ENCODE measurements at regions of chr2 and their contacts with region 1.

Region 1: GRCh38 chr2:113173542-113174395 is at the start of gene PSD4:
- DNase-seq: peak; percentile 95
- ATAC-seq: peak; percentile 81
- H3K4me3 Mint-ChIP-seq: peak within 1 kb of the TSS; percentile 91
- H3K27ac Mint-ChIP-seq: peak within 1 kb of the TSS; percentile 99
- H3K4me1 Mint-ChIP-seq: peaks cover 73% of the 10 kb centered on the region
- H3K27me3 Mint-ChIP-seq: no peaks in the 10 kb centered on the region
- total RNA-seq, gene PSD4: 232 to 274 TPM

Region 2: DNA sequence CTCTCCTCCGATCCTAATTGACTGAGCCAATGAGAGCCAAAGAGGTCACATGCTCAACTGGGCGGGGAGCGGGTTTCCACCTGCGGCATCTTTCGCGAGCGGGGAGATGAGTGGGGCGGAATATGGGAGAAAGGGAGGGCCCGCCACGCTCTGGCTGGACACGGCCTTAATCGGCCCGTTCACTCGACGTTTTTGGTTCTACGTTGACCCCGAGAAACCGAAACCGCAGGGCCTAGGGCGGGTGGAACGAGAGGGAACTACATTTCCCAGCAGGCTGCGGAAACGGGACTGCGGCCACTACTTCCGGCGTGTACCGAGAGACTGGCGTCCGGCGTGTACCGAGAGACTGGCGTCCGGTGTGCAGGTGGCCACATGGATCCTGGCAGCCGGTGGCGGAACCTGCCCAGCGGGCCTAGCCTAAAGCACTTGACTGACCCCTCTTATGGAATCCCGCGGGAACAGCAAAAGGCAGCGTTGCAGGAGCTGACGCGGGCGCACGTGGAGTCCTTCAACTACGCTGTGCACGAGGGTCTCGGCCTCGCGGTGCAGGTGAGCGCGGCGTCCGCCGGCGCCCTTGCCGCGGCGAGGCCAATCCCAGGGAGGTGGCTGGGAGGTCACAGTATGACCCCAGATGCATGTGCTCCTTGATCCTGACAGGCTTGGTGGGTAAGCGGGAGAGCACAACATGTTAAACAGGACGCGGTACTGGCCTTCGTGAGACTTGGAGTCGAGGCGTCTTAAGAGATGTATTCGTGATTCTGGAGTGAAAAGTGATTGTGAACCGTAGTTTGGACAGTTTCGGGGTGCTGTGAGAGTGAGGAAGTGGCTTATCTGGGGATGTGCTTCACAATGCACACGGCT is 631.4 kb before region 1 on chr2 and contains the start of gene POLR1B:
- CTCF ChIA-PET with region 1: no interaction called
- POLR2A ChIA-PET with region 1: no interaction called
- intact Hi-C with region 1: loop called in 1 of 2 experiments (anchors 10 kb)
- DNase-seq: peak; percentile 87
- ATAC-seq: peak; percentile 85
- H3K4me3 Mint-ChIP-seq: no peak within 1 kb of the TSS
- H3K27ac Mint-ChIP-seq: no peak within 1 kb of the TSS
- H3K4me1 Mint-ChIP-seq: peaks cover 18% of the 10 kb centered on the region
- H3K27me3 Mint-ChIP-seq: no peaks in the 10 kb centered on the region
- total RNA-seq, gene POLR1B: 47.0 to 63.3 TPM

Region 3: GRCh38 chr2:112784199-112785189 is 389.3 kb before region 1 on chr2 and contains the start of gene IL1A:
- CTCF ChIA-PET with region 1: no interaction called
- POLR2A ChIA-PET with region 1: no interaction called
- intact Hi-C with region 1: no loop called
- DNase-seq: peak; percentile 28
- ATAC-seq: peak; percentile 71
- H3K4me3 Mint-ChIP-seq: peak within 1 kb of the TSS; percentile 22
- H3K27ac Mint-ChIP-seq: no peak within 1 kb of the TSS
- H3K4me1 Mint-ChIP-seq: peaks cover 3% of the 10 kb centered on the region
- H3K27me3 Mint-ChIP-seq: peaks cover 8% of the 10 kb centered on the region
- total RNA-seq, gene IL1A: 6.6 to 6.9 TPM

Region 4: DNA sequence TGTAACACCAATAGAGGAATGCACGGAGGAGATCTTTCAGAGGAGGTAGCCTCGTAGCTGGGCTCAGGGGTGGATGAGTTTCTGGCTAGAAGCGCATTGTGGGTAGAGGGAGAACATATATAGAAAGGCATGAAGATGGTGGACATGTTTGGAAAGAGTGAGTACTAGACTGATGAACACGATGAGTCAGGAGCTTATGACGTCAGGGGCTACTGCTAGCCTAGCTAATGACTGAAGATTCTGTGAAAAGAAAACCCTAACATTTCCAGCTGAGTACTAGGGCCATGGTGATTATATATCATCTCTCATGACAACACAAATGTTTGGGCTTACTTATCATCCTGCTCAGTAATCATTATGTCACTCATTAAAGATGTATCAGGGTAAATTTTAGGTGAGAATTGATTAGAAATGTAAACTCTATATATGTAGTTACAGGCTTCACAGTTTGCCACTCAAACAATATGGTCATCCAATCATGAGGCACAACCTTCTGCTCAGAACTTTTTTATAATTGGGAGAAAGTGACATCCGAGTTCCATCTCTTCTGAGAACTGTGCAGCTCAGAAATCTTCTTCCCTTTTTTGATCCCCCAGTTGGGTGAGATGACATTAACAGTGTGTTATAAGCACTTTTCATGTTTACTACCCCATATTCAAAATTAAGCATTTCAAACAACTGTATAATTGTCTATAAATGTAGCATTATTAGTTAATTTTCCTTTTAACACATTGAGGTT is 68.6 kb before region 1 on chr2:
- CTCF ChIA-PET with region 1: interaction called, 13 read pairs
- POLR2A ChIA-PET with region 1: interaction called, 3 read pairs
- intact Hi-C with region 1: no loop called
- DNase-seq: peak; percentile 73
- ATAC-seq: peak; percentile 59
- H3K4me3 Mint-ChIP-seq: no peak overlapping the region
- H3K27ac Mint-ChIP-seq: peak overlapping the region; percentile 93
- H3K4me1 Mint-ChIP-seq: peaks cover 39% of the 10 kb centered on the region
- H3K27me3 Mint-ChIP-seq: peaks cover 4% of the 10 kb centered on the region

Region 5: GRCh38 chr2:113157118-113157896 is 16.5 kb before region 1 on chr2:
- CTCF ChIA-PET with region 1: interaction called, 54 read pairs
- POLR2A ChIA-PET with region 1: interaction called, 22 read pairs
- intact Hi-C with region 1: loop called (anchors 1 kb)
- DNase-seq: peak; percentile 74
- ATAC-seq: peak; percentile 61
- H3K4me3 Mint-ChIP-seq: peak overlapping the region; percentile 82
- H3K27ac Mint-ChIP-seq: peak overlapping the region; percentile 90
- H3K4me1 Mint-ChIP-seq: peaks cover 22% of the 10 kb centered on the region
- H3K27me3 Mint-ChIP-seq: no peaks in the 10 kb centered on the region

Region 6: GRCh38 chr2:113198790-113199612 is 25.2 kb after region 1 on chr2:
- CTCF ChIA-PET with region 1: interaction called, 24 read pairs
- POLR2A ChIA-PET with region 1: interaction called, 8 read pairs
- intact Hi-C with region 1: loop called in 1 of 2 experiments (anchors 1 kb)
- DNase-seq: peak; percentile 88
- ATAC-seq: peak; percentile 70
- H3K4me3 Mint-ChIP-seq: no peak overlapping the region
- H3K27ac Mint-ChIP-seq: no peak overlapping the region
- H3K4me1 Mint-ChIP-seq: peaks cover 8% of the 10 kb centered on the region
- H3K27me3 Mint-ChIP-seq: no peaks in the 10 kb centered on the region